Heart left ventricle (tissue), 16 donors: ENCODE measurements at regions of chr3 and their contacts with region 1.

Region 1: GRCh38 chr3:20185701-20186598 is at the start of gene SGO1:
- DNase-seq: peak; percentile 99 to 100 (median 99)
- ATAC-seq: peak; percentile 100
- H3K4me3 ChIP-seq: peak within 1 kb of the TSS; percentile 47 to 85 (median 66)
- H3K27ac ChIP-seq: peak within 1 kb of the TSS; percentile 77 to 98 (median 89)
- H3K4me1 ChIP-seq: peaks cover 0 to 21% (median 8%) of the 10 kb centered on the region in 12 donors
- H3K27me3 ChIP-seq: no peaks in the 10 kb centered on the region
- CTCF ChIP-seq: peak in 3 of 12 donors; percentile 8 to 22 (median 12)
- POLR2A ChIP-seq: peak; percentile 53 to 86
- total RNA-seq, gene SGO1: 0.12 to 2.8 (median 0.30) TPM in 5 of 9 donors, not detected in the others

Region 2: DNA sequence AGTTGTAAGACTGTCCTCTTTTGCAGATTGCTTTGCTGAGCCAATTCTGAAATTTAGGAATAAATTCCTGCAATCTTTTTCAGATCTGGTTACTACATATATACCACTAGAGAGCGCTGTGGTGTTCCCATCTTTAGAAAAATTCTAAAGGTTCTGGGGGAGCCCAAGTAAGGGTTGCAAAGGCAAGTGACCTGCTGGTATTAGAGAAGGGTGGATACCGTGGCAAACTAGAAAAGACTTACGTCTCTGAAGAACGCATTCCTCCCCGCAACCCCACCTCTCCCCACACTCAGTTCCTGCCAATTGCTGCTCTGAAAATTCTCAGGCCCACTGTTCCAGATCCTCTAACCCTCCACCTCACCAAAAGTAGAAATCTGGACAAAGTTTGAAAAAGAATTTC is 300.5 kb before region 1 on chr3:
- intact Hi-C with region 1: loop called in 2 of 10 experiments (anchors 10 kb)
- DNase-seq: no peak
- ATAC-seq: peak in 1 of 4 donors; percentile 29
- H3K4me3 ChIP-seq: no peak overlapping the region
- H3K27ac ChIP-seq: no peak overlapping the region
- H3K4me1 ChIP-seq: peaks cover 0 to 18% (median 8%) of the 10 kb centered on the region in 12 donors
- H3K27me3 ChIP-seq: no peaks in the 10 kb centered on the region
- CTCF ChIP-seq: peak; percentile 36 to 68 (median 48)
- POLR2A ChIP-seq: no peak

Region 3: GRCh38 chr3:19946832-19947548 is 239.0 kb before region 1 on chr3 and contains the start of gene RAB5A:
- intact Hi-C with region 1: loop called in 8 of 10 experiments (anchors 1 to 10 kb)
- DNase-seq: peak; percentile 98
- ATAC-seq: peak; percentile 97 to 99 (median 98)
- H3K4me3 ChIP-seq: peak within 1 kb of the TSS; percentile 65 to 99 (median 90)
- H3K27ac ChIP-seq: peak within 1 kb of the TSS; percentile 93 to 99 (median 98)
- H3K4me1 ChIP-seq: peaks cover 7 to 44% (median 25%) of the 10 kb centered on the region in 12 donors
- H3K27me3 ChIP-seq: no peaks in the 10 kb centered on the region
- CTCF ChIP-seq: no peak
- POLR2A ChIP-seq: peak in 1 of 2 donors; percentile 69
- total RNA-seq, gene RAB5A: 34.9 to 74.0 (median 61.9) TPM

Region 4: DNA sequence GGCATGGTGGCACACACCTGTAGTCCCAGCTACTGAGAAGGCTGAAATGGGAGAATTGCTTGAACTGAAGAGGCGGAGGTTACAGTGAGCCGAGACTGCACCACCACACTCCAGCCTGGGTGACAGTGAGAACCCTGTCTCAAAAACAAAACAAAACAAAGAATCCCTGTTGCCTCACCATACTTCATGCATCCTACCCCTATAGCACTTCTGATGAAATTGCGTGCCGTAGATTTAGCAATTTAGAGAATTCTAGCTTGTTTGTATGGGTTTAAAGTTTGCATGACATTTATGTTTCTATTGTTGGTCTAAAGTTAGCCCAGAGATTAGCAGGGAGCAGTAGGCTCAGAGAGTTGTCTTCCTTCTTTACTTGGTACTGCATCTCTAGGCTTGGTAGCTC is 231.3 kb before region 1 on chr3:
- intact Hi-C with region 1: loop called in 6 of 10 experiments (anchors 5 to 10 kb)
- DNase-seq: no peak
- ATAC-seq: no peak
- H3K4me3 ChIP-seq: no peak overlapping the region
- H3K27ac ChIP-seq: no peak overlapping the region
- H3K4me1 ChIP-seq: peaks cover 0 to 57% (median 26%) of the 10 kb centered on the region in 12 donors
- H3K27me3 ChIP-seq: no peaks in the 10 kb centered on the region
- CTCF ChIP-seq: no peak
- POLR2A ChIP-seq: no peak

Region 5: GRCh38 chr3:20066848-20067617 is 118.9 kb before region 1 on chr3:
- intact Hi-C with region 1: no loop called
- DNase-seq: peak in 1 of 5 donors; percentile 31
- ATAC-seq: peak in 1 of 4 donors; percentile 40
- H3K4me3 ChIP-seq: no peak overlapping the region
- H3K27ac ChIP-seq: peak overlapping the region in 7 of 12 donors; percentile 9 to 57 (median 23)
- H3K4me1 ChIP-seq: peaks cover 0 to 62% (median 29%) of the 10 kb centered on the region in 12 donors
- H3K27me3 ChIP-seq: no peaks in the 10 kb centered on the region
- CTCF ChIP-seq: no peak
- POLR2A ChIP-seq: no peak

Region 6: DNA sequence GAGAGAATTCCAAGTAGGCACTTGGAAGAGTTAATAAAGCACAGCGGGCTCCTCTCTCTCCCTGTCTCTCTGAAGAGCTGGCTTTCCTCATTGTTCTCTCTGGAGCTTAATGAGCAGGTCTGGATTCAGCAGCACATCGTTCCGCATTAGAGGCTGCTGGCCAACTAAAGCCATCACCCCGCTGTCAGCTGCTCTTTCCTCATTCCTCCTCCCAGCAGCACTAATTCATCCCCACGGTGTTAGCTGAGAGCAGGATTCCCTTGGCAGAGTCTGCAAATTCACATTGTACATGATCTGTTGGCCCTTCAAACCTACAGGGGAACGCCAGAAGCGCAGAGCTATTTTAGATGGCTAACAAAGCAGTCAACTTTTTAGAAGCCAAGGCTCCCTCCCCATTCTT is 44.1 kb before region 1 on chr3:
- intact Hi-C with region 1: loop called in 1 of 10 experiments (anchors 5 kb)
- DNase-seq: peak in 4 of 5 donors; percentile 56 to 75 (median 69)
- ATAC-seq: peak; percentile 96 to 99 (median 98)
- H3K4me3 ChIP-seq: peak overlapping the region in 1 of 12 donors; percentile 27
- H3K27ac ChIP-seq: peak overlapping the region in 9 of 12 donors; percentile 20 to 77 (median 64)
- H3K4me1 ChIP-seq: peaks cover 0 to 18% (median 9%) of the 10 kb centered on the region in 12 donors
- H3K27me3 ChIP-seq: no peaks in the 10 kb centered on the region
- CTCF ChIP-seq: peak in 1 of 12 donors; percentile 12
- POLR2A ChIP-seq: no peak

Region 7: GRCh38 chr3:20361000-20361399 is 175.1 kb after region 1 on chr3:
- intact Hi-C with region 1: no loop called
- DNase-seq: no peak
- ATAC-seq: no peak
- H3K4me3 ChIP-seq: no peak overlapping the region
- H3K27ac ChIP-seq: no peak overlapping the region
- H3K4me1 ChIP-seq: no peaks in the 10 kb centered on the region
- H3K27me3 ChIP-seq: no peaks in the 10 kb centered on the region
- CTCF ChIP-seq: no peak
- POLR2A ChIP-seq: no peak